Caco-2 (cell line): ENCODE measurements at regions of chr20 and their contacts with region 1.

Region 1: GRCh38 chr20:25382704-25383565 is 7.7 kb downstream of the ABHD12 start:
- DNase-seq: no peak
- H3K4me3 ChIP-seq: no peak overlapping the region
- H3K4me3 Mint-ChIP-seq: no peak overlapping the region
- H3K27ac Mint-ChIP-seq: no peak overlapping the region
- H3K4me1 ChIP-seq: peaks cover 36% of the 10 kb centered on the region
- H3K4me1 Mint-ChIP-seq: peaks cover 57% of the 10 kb centered on the region
- H3K27me3 ChIP-seq: no peaks in the 10 kb centered on the region
- H3K27me3 Mint-ChIP-seq: no peaks in the 10 kb centered on the region
- CTCF ChIP-seq: no peak

Region 2: DNA sequence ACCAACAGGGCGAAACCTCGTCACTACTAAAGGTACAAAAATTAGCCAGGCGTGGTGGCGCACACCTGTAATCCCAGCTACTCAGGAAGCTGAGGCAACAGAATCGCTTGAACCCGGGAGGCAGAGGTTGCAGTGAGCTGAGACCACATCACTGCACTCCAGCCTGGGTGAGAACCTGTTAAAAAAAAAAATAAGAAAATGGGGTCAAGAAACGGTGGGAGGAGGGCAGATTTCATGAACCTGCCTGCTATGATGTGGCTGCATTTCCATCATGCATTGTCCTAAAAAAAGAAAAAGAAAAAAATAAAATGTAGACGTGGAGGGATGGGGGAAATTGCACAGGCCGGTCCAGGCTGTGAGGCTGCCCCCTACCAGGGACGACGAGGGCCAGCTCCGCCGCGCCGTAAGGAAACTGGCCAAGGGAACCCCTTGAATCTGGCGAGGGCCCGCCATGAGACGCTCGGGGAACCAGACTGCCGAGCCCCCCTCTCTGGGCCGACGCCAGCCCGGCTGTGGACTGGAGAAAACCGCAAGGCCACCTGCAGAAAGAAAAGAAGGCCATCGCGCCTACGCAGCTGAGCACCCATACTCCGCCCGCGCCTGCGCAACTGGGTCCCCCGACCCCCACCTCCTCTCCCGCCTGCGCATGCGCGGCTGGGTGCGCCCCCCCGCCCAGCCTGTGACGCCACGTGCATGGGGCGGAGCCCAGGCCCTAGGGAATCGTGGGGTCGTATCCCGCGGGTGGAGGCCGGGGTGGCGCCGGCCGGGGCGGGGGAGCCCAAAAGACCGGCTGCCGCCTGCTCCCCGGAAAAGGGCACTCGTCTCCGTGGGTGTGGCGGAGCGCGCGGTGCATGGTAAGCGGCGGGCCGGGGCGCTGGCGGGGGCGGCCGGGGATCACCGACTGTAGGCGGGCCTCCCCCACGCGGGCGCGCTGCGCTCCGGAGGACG is 187.6 kb before region 1 on chr20 and contains the start of gene ENTPD6:
- CTCF ChIA-PET with region 1: no interaction called
- POLR2A ChIA-PET with region 1: no interaction called
- intact Hi-C with region 1: no loop called
- DNase-seq: peak; percentile 92 to 97
- H3K4me3 ChIP-seq: peak within 1 kb of the TSS; percentile 80
- H3K4me3 Mint-ChIP-seq: peak within 1 kb of the TSS; percentile 78
- H3K27ac Mint-ChIP-seq: peak within 1 kb of the TSS; percentile 33
- H3K4me1 ChIP-seq: peaks cover 4% of the 10 kb centered on the region; the same call in 1 of the 2 replicates
- H3K4me1 Mint-ChIP-seq: no peaks in the 10 kb centered on the region
- H3K27me3 ChIP-seq: no peaks in the 10 kb centered on the region
- H3K27me3 Mint-ChIP-seq: no peaks in the 10 kb centered on the region
- CTCF ChIP-seq: peak in 1 of 2 experiments; percentile 48
- total RNA-seq, gene ENTPD6: 86.6 and 89.4 TPM in 2 replicates

Region 3: DNA sequence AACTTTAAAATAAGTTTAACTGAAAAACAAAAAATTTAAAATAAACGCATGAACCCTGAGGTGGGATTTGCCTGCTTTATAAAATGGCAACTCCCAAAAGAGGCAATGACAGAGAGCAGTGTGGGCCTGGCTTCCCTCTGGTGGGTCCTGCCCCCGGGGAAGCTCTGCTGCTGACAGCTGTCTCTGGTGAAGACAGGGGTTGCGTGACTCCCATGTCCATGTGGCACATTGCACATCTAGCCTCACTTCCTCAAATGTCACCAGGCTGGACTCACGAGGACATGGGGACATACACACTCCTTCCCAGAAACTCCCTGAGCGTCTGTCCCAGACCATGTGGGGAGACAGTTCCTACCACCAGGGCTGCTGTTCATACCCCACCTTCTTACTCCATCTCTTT is 58.5 kb before region 1 on chr20:
- CTCF ChIA-PET with region 1: no interaction called
- POLR2A ChIA-PET with region 1: no interaction called
- intact Hi-C with region 1: no loop called
- DNase-seq: no peak
- H3K4me3 ChIP-seq: no peak overlapping the region
- H3K4me3 Mint-ChIP-seq: no peak overlapping the region
- H3K27ac Mint-ChIP-seq: no peak overlapping the region
- H3K4me1 ChIP-seq: no peaks in the 10 kb centered on the region
- H3K4me1 Mint-ChIP-seq: peaks cover 9% of the 10 kb centered on the region
- H3K27me3 ChIP-seq: no peaks in the 10 kb centered on the region
- H3K27me3 Mint-ChIP-seq: no peaks in the 10 kb centered on the region
- CTCF ChIP-seq: no peak

Region 4: GRCh38 chr20:25353747-25354705 is 28.9 kb before region 1 on chr20:
- CTCF ChIA-PET with region 1: no interaction called
- POLR2A ChIA-PET with region 1: no interaction called
- intact Hi-C with region 1: loop called (anchors 1 kb)
- DNase-seq: peak; percentile 73 to 78
- H3K4me3 ChIP-seq: no peak overlapping the region
- H3K4me3 Mint-ChIP-seq: peak overlapping the region; percentile 18
- H3K27ac Mint-ChIP-seq: peak overlapping the region; percentile 46
- H3K4me1 ChIP-seq: peaks cover 27% of the 10 kb centered on the region
- H3K4me1 Mint-ChIP-seq: peaks cover 18% of the 10 kb centered on the region
- H3K27me3 ChIP-seq: no peaks in the 10 kb centered on the region
- H3K27me3 Mint-ChIP-seq: no peaks in the 10 kb centered on the region
- CTCF ChIP-seq: no peak

Region 5: DNA sequence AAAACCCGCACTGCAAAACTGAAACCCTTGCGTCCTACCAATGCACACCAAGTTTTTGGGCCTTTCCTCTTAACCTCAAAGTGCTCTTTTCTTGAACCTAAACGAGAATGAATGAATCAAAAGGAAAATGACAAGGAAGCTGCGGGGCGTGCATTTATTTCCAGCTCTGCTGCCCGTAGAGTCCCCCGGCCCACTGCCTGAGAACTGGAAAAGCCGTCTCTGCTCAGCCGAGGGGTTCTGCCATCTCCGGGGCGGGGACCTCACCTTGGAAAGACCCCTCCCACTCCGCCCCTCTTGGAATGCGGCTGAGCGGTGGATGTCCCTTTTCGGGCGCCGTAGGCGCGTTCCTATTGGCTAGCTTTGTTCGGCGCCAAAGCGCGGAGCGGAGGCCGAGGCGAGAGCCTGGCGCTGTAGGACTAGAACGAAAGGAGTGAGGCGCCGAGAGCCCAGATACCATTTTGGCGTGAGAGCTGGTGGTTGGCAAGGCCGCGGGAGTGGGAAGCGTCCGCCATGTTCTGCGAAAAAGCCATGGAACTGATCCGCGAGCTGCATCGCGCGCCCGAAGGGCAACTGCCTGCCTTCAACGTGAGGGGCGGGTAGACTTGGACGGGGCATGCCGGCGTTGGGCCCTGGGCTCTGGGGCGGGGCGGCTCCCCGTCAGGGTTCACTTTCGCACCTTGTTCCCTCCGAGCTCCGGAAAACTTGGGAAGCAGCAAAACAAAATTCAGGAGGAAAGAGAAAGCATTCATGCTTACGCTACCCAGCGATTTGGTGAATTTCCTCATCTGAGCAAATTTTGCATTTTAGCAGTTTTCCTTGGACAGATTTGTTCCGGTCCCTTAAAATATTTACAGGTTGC is 24.6 kb after region 1 on chr20 and contains the start of gene GINS1:
- CTCF ChIA-PET with region 1: no interaction called
- POLR2A ChIA-PET with region 1: interaction called, 11 read pairs
- intact Hi-C with region 1: no loop called
- DNase-seq: peak; percentile 98
- H3K4me3 ChIP-seq: peak within 1 kb of the TSS; percentile 69
- H3K4me3 Mint-ChIP-seq: peak within 1 kb of the TSS; percentile 96
- H3K27ac Mint-ChIP-seq: peak within 1 kb of the TSS; percentile 99
- H3K4me1 ChIP-seq: 0 out of 2 replicates have a peak, but pooled peaks cover 3% of the 10 kb centered on the region
- H3K4me1 Mint-ChIP-seq: peaks cover 11% of the 10 kb centered on the region
- H3K27me3 ChIP-seq: no peaks in the 10 kb centered on the region
- H3K27me3 Mint-ChIP-seq: no peaks in the 10 kb centered on the region
- CTCF ChIP-seq: no peak
- total RNA-seq, gene GINS1: 48.7 and 50.9 TPM in 2 replicates

Region 6: GRCh38 chr20:25418776-25419175 is 35.8 kb after region 1 on chr20:
- CTCF ChIA-PET with region 1: no interaction called
- POLR2A ChIA-PET with region 1: no interaction called
- intact Hi-C with region 1: no loop called
- DNase-seq: no peak
- H3K4me3 ChIP-seq: no peak overlapping the region
- H3K4me3 Mint-ChIP-seq: no peak overlapping the region
- H3K27ac Mint-ChIP-seq: no peak overlapping the region
- H3K4me1 ChIP-seq: peaks cover 7% of the 10 kb centered on the region; the same call in 1 of the 2 replicates
- H3K4me1 Mint-ChIP-seq: no peaks in the 10 kb centered on the region
- H3K27me3 ChIP-seq: no peaks in the 10 kb centered on the region
- H3K27me3 Mint-ChIP-seq: no peaks in the 10 kb centered on the region
- CTCF ChIP-seq: no peak